ENCODE measurements at regions of chr20 and their contacts with region 1.

Region 1: DNA sequence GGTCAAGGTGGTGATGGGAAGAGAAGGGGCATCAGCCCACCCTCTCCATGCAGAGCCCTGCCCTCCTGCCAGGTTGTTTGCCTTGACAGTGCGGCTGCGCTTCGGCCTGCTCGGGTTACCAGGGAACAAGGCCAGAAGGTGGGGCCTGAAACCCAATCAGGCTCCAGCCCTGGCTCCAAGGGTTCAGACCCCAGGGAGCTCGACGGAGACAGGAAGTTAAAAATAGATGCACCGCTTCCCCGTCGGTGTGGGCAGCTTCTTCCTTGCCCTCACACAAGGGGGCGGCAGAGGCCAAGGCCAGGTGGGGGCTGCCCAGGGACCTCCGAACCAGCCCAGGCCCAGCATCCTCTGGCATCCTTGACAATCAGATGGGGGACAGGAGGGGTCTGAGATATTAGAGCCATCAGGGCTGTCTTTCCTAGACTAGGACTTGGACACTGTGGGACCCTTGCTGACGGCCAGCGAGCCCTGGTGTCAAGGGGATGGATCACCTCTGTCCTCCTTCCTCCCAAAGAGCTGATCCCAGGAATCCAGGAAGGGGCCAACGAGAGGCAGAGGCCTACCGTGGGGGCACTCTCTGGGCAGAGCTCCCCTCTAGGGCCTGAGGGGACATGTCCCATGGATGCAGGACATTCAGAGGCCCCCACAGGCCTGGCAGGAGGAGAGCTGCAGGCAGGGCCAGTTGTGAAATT is 65.2 kb downstream of the RIPOR3 start:
- DNase-seq: peak in 4 of 7 donors; percentile 33 to 62 (median 51)
- H3K4me3 ChIP-seq: no peak overlapping the region
- H3K27ac ChIP-seq: peak overlapping the region in 2 of 5 donors; percentile 12 to 55
- H3K4me1 ChIP-seq: peaks cover 0 to 8% of the 10 kb centered on the region in 2 donors
- H3K27me3 ChIP-seq: no peaks in the 10 kb centered on the region
- CTCF ChIP-seq: peak; percentile 25 to 52 (median 42)
- POLR2A ChIP-seq: no peak

Region 2: DNA sequence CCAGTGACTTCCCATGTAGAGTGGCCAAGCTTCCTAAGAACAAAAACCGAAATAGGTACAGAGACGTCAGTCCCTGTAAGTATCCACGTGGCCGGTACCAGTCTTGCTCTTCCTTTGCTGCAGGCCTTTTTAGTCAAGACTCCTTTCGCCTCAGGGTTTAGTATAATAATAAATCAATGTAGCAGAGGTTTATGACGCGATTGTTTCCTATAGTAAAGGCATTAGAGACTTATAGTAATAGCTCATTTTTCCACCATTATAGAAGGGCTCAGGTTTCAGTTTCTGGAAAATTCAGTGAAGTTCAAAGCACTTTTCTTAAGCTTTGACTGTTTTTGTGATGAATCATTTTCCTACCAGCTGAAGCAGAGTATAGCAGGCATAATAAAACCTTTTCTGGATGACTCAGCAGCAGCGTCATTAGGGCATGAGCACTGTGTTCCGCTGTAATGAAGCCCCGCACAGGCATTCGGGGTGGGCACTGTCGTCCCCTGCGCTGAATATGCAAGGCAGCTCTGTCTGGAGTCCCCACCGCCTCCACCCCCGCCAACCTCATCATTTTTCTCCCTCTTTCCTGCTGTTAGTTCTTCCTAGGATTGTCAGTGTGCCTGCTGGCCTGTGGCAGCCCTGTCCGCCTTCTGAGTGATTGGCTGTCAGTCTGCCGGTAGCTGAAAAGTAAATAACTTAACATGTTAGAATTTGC is 64.6 kb before region 1 on chr20:
- intact Hi-C with region 1: no loop called
- DNase-seq: peak; percentile 70 to 81 (median 74)
- H3K4me3 ChIP-seq: no peak overlapping the region
- H3K27ac ChIP-seq: peak overlapping the region; percentile 39 to 94 (median 81)
- H3K4me1 ChIP-seq: peaks cover 10 to 37% of the 10 kb centered on the region in 2 donors
- H3K27me3 ChIP-seq: no peaks in the 10 kb centered on the region
- CTCF ChIP-seq: no peak
- POLR2A ChIP-seq: peak in 1 of 2 donors; percentile 22

Region 3: GRCh38 chr20:50713657-50714101 is 87.5 kb after region 1 on chr20:
- intact Hi-C with region 1: loop called in 1 of 2 experiments (anchors 10 kb)
- DNase-seq: peak; percentile 42 to 72 (median 52)
- H3K4me3 ChIP-seq: no peak overlapping the region
- H3K27ac ChIP-seq: peak overlapping the region in 4 of 5 donors; percentile 19 to 80 (median 39)
- H3K4me1 ChIP-seq: peaks cover 7 to 17% of the 10 kb centered on the region in 2 donors
- H3K27me3 ChIP-seq: no peaks in the 10 kb centered on the region
- CTCF ChIP-seq: peak; percentile 21 to 56 (median 50)
- POLR2A ChIP-seq: no peak